Natural killer cell (primary cell): ENCODE measurements at regions of chr5 and their contacts with region 1.

Region 1: DNA sequence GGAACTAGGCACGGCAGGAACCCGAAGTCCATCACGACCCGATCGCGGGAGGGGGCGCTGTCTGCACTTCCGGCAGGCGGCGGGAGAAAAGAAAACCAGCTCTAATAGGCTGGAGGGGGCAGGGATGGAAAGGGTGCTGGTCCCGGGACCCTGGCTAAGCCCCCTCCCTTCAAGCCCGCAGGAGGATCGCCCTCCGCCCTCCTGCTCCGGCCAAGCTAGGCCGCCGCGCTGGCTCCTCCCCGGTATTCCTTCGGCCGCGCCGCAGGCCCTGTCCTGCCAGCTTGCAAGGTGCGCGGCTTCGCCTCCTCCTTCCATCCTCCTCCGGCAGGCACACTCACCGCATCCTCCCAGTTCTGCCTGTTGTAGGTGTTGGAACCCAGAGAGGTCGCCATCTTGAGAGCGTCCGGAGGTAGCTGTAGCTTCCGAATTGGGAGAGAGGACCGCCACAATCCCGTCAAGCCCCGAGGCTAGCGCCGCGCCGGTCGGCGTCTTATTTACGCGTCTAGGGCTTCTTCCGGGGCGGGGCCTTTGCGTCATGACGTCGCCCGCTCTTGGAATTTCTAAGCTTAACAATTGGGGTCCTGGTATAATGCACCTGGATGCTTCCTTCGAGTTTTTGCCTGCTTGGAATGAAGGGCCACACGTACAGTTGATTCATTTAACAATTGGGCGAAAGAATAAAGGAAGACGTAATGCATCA is at the start of gene RBM22:
- DNase-seq: peak; percentile 90 to 96
- ATAC-seq: peak; percentile 90 to 97 (median 95)
- H3K4me3 ChIP-seq: peak within 1 kb of the TSS; percentile 90
- H3K4me3 Mint-ChIP-seq: no peak within 1 kb of the TSS
- H3K27ac ChIP-seq: peak within 1 kb of the TSS; percentile 92
- H3K27ac Mint-ChIP-seq: no peak within 1 kb of the TSS
- H3K4me1 ChIP-seq: peaks cover 5% of the 10 kb centered on the region
- H3K4me1 Mint-ChIP-seq: peaks cover 7 to 15% of the 10 kb centered on the region in 2 donors
- H3K27me3 ChIP-seq: peaks cover 2% of the 10 kb centered on the region
- H3K27me3 Mint-ChIP-seq: no peaks in the 10 kb centered on the region
- CTCF ChIP-seq: peak; percentile 85
- total RNA-seq, gene RBM22: 136 to 149 (median 145) TPM

Region 2: DNA sequence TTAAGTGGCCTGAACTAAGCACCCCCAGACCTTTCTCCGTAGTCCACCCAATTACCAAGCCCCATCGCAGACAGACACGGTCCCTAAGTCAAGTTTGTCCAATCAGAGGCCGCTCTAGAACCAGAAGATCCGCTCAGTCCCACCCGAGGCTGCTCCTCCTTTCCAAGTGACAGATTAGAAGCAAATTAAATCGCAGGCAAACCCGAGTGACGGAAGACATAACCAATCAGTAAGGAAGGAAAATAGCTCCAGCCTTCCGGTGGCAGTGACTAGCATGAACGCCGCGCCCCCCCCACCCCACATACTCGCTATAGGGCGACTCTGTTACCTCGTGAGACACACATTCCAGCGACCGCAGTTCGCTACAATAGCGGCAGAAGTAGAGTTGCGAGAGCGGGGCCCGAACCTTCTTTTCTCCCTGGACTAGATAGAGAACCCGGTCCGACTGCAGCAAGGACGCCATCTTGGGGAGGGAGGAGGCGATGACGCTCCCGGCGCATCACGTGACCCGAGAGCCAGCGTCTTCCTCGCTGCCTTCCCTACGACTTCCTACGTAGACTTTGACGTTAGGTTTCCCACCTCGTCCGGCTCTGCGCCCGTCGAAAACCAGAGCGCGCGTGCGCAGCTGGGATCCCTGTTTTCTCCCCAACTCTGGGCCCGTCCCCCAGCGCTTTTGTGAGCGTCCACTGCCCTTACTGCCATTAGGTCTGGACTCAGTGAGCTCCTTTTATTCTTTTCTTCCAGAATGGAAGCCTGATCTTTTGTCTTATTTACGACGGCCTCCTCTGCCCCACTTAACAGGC is 58.0 kb after region 1 on chr5 and contains the start of gene DCTN4:
- intact Hi-C with region 1: loop called (anchors 1 kb)
- DNase-seq: peak; percentile 90 to 99
- ATAC-seq: peak; percentile 89 to 97 (median 90)
- H3K4me3 ChIP-seq: peak within 1 kb of the TSS; percentile 83
- H3K4me3 Mint-ChIP-seq: no peak within 1 kb of the TSS
- H3K27ac ChIP-seq: peak within 1 kb of the TSS; percentile 97
- H3K27ac Mint-ChIP-seq: no peak within 1 kb of the TSS
- H3K4me1 ChIP-seq: peaks cover 14% of the 10 kb centered on the region
- H3K4me1 Mint-ChIP-seq: peaks cover 15 to 32% of the 10 kb centered on the region in 2 donors
- H3K27me3 ChIP-seq: no peaks in the 10 kb centered on the region
- H3K27me3 Mint-ChIP-seq: peaks cover 4 to 14% of the 10 kb centered on the region in 2 donors
- CTCF ChIP-seq: no peak
- total RNA-seq, gene DCTN4: 90.0 to 108 (median 92.0) TPM

Region 3: GRCh38 chr5:151659001-151659754 is 958.4 kb after region 1 on chr5:
- intact Hi-C with region 1: no loop called
- DNase-seq: peak; percentile 81 to 89
- ATAC-seq: peak; percentile 92 to 100 (median 100)
- H3K4me3 ChIP-seq: no peak overlapping the region
- H3K4me3 Mint-ChIP-seq: no peak overlapping the region
- H3K27ac ChIP-seq: no peak overlapping the region
- H3K27ac Mint-ChIP-seq: no peak overlapping the region
- H3K4me1 ChIP-seq: peaks cover 11% of the 10 kb centered on the region
- H3K4me1 Mint-ChIP-seq: peaks cover 11 to 16% of the 10 kb centered on the region in 2 donors
- H3K27me3 ChIP-seq: peaks cover 3% of the 10 kb centered on the region
- H3K27me3 Mint-ChIP-seq: peaks cover 0 to 6% of the 10 kb centered on the region in 2 donors
- CTCF ChIP-seq: peak; percentile 85